ENCODE measurements at regions of chr14 and their contacts with region 1.

Region 1: DNA sequence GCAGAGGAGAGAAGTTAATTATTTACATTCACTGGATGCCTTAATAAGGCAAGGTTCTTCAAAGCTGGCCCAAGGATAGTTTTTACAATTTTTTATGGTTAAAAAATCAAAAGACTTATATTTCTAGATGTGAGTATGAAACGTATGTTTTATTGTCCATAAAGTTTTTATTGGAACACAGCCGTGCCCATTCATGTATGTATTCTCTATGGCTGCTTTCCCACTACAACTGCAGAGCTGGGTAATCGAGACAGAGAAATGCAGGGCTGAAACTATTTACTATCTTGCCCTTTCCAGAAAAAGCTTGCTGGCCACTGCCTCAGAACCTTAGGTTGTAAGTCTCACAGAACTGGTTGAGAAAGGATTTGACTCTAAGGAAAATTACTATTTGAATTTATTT is 16.4 kb downstream of the JKAMP start:
- DNase-seq: no peak
- H3K27ac ChIP-seq: no peak overlapping the region
- CTCF ChIP-seq: no peak

Region 2: DNA sequence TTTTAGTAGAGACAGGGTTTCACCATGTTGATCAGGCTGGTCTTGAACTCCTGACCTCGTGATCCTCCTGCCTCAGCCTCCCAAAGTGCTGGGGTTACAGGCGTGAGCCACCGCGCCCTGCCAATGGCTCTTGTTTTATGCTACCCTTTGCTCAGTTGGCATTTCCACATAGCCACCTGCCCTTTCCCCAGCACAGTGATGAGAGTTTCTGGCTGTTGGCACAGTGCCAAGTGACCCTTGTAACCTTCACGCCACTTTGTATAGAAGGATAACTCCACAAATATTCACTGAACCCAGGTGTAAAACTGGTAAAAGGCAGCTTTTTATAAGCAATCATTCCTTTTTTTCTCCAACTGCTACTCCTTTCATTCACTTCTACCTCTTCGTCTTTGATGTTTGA is 94.3 kb after region 1 on chr14:
- CTCF ChIA-PET with region 1: no interaction called
- POLR2A ChIA-PET with region 1: interaction called, 11 read pairs
- DNase-seq: no peak
- H3K27ac ChIP-seq: no peak overlapping the region
- CTCF ChIP-seq: no peak

Region 3: GRCh38 chr14:59657769-59658168 is 157.0 kb after region 1 on chr14:
- CTCF ChIA-PET with region 1: no interaction called
- POLR2A ChIA-PET with region 1: no interaction called
- DNase-seq: no peak
- H3K27ac ChIP-seq: no peak overlapping the region
- CTCF ChIP-seq: no peak

Region 4: GRCh38 chr14:59688224-59689170 is 187.8 kb after region 1 on chr14:
- CTCF ChIA-PET with region 1: no interaction called
- POLR2A ChIA-PET with region 1: no interaction called
- DNase-seq: peak; percentile 33
- H3K27ac ChIP-seq: peak overlapping the region; percentile 37
- CTCF ChIP-seq: peak; percentile 48